Breast epithelium (tissue), 4 donors: ENCODE measurements at regions of chr9 and their contacts with region 1.

Region 1: DNA sequence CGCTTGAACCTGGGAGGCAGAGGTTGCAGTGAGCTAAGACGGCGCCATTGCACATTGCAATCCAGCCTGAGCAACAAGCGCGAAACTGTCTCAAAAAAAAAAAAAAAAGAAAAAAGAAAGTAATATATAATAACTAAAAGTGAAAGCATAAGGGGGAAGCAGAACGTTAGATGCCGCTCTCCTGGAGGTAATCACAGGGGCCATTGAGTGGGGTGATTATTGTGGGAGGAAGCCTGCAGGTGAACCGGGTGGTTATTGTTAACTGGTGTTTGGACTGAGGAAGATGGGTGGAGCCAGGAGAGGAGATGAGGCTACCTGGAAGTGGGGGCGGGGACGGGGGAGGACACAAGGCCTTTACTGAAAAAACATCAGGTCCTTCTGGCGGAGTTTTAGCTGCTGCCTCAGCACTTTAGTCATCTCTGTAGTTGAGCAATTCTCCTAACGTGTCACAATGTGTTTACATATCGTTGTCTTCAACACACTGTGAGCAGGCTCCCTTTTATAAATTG is 5.3 kb upstream of the TJP2 start:
- DNase-seq: peak in 1 of 2 donors; percentile 47
- H3K4me3 ChIP-seq: peak overlapping the region in 1 of 3 donors; percentile 14
- H3K27ac ChIP-seq: no peak overlapping the region
- H3K4me1 ChIP-seq: peaks cover 0 to 5% of the 10 kb centered on the region in 2 donors
- H3K27me3 ChIP-seq: no peaks in the 10 kb centered on the region
- CTCF ChIP-seq: no peak
- POLR2A ChIP-seq: no peak

Region 2: DNA sequence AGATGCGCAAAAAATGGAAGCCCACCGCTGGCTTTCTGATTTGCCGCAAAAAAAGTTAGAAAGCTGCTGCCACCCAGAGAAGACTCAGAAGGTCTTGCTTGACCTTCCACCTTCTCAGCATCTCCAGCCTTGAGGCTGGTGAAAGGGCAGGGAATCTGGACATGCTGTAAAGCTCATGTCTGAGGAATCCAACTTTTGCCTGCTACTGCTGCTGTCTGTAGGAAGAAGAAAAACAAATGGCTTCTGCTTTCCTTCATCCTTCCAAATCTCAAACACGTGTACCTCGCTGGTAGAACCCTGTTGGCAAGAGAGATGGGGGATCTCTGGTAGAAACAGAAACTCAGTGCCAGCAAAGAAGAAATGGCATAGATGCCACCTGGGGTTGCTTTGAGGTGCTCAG is 15.5 kb after region 1 on chr9:
- intact Hi-C with region 1: loop called (anchors 2 kb)
- DNase-seq: no peak
- H3K4me3 ChIP-seq: no peak overlapping the region
- H3K27ac ChIP-seq: no peak overlapping the region
- H3K4me1 ChIP-seq: no peaks in the 10 kb centered on the region
- H3K27me3 ChIP-seq: no peaks in the 10 kb centered on the region
- CTCF ChIP-seq: no peak
- POLR2A ChIP-seq: no peak